Activated CD4-positive, alpha-beta memory T cell treated with anti-CD3 and anti-CD28 coated beads, Interleukin-2, amount 10 ng/mL, durations not matched to agents 7 days and 5 days (primary cell): ENCODE measurements at regions of chrX and their contacts with region 1.

Region 1: GRCh38 chrX:130120746-130121504 is 10.6 kb upstream of the ELF4 start:
- DNase-seq: peak; percentile 69
- H3K4me3 Mint-ChIP-seq: peak overlapping the region; percentile 65
- H3K27ac Mint-ChIP-seq: peak overlapping the region; percentile 59
- H3K4me1 Mint-ChIP-seq: peaks cover 33% of the 10 kb centered on the region
- H3K27me3 Mint-ChIP-seq: no peaks in the 10 kb centered on the region

Region 2: DNA sequence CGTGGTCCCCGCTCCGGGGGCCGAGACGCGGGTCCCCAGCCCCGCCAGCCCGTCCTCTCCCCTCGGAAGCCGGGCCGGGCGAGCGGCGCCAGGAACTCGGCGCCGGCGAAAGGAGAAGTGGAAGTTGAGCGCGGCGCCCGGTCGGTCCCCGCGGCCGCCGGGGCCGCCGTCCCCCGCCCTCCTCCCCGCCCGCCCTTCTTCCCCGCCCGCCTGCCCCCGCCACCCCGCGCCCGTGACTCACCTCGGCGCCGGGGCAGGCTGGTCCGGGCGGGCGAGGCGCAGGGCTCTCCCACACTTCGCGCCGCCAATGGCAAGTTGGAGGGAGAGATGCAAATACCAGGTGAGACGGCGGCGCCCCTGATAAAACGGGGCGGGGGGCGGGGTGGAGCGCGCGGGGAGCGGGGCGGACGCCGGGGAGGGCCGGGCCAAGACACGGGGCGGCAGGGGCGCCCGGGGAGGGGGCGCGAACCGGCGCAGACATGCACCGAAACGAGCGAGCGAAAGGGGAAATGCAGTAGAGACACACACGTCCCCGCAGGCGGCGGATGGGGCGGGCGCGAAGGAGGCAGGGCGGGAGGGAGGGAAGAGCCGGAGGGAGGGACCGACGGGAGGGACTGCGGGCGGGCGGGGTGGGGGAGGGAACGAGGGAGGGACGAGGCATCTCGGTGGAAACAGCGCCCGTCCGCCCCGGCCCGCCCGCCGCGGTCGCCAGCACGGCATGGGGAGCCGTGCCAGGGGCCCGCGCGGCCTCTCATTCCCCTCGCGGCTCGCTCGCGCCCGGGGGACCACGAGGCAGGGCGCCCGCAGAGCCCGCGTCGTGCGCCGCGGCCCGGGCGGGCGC is 10.3 kb before region 1 on chrX and contains the start of gene ELF4:
- CTCF ChIA-PET with region 1: interaction called, 6 read pairs
- POLR2A ChIA-PET with region 1: interaction called, 25 read pairs
- DNase-seq: peak; percentile 57
- H3K4me3 Mint-ChIP-seq: peak within 1 kb of the TSS; percentile 95
- H3K27ac Mint-ChIP-seq: peak within 1 kb of the TSS; percentile 90
- H3K4me1 Mint-ChIP-seq: peaks cover 45% of the 10 kb centered on the region
- H3K27me3 Mint-ChIP-seq: no peaks in the 10 kb centered on the region
- total RNA-seq, gene ELF4: 48.0 to 48.7 TPM

Region 3: GRCh38 chrX:130165703-130166502 is 45.0 kb after region 1 on chrX and contains the start of gene AIFM1:
- CTCF ChIA-PET with region 1: interaction called, 11 read pairs
- POLR2A ChIA-PET with region 1: interaction called, 3 read pairs
- DNase-seq: peak; percentile 90
- H3K4me3 Mint-ChIP-seq: peak within 1 kb of the TSS; percentile 82
- H3K27ac Mint-ChIP-seq: peak within 1 kb of the TSS; percentile 92
- H3K4me1 Mint-ChIP-seq: peaks cover 50% of the 10 kb centered on the region
- H3K27me3 Mint-ChIP-seq: no peaks in the 10 kb centered on the region
- total RNA-seq, gene AIFM1: 41.2 to 41.8 TPM

Region 4: DNA sequence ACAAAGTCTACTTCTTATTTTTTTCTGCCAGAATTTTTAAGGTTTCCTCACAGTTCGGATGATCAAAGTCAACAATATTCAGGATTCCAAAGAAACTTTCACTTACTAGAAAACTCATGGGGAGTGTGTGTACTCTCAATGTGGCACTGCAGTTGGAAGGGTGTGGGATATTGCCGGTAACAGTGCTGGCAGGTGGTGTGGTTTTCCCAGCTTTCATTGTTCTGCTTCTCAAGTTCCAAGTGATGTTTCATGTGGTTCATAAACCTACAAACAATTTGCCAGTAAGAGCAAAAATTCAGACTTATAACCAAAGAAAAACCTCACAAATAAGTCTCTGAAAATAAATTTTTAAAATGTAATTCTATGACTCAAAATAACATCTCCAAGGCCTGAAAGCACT is 107.9 kb after region 1 on chrX:
- CTCF ChIA-PET with region 1: no interaction called
- POLR2A ChIA-PET with region 1: no interaction called
- DNase-seq: no peak
- H3K4me3 Mint-ChIP-seq: no peak overlapping the region
- H3K27ac Mint-ChIP-seq: no peak overlapping the region
- H3K4me1 Mint-ChIP-seq: no peaks in the 10 kb centered on the region
- H3K27me3 Mint-ChIP-seq: no peaks in the 10 kb centered on the region